ENCODE measurements at regions of chr2 and their contacts with region 1.

Region 1: DNA sequence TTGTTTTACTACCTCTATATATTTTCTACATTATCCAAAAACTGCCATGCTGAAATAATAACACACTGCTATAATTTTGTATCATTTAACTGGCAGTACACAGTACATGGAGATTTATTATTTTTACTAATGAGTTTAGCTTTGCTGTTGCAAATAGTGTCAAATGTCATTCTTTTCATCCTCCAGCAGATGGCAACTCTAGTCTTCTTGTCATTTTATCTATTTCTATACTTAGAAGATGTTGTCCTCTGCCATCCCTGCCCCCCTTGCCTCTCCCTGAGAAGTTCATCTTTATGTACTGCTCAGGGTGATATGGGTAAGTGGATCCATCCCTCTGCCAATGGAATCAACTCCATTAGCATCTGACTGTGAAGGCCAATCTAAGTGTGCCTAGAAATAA is 21.7 kb upstream of the LRRTM1 start:
- DNase-seq: peak in 1 of 5 donors; percentile 37
- ATAC-seq: peak in 3 of 4 donors; percentile 50 to 60 (median 50)
- H3K4me3 ChIP-seq: no peak overlapping the region
- H3K27ac ChIP-seq: no peak overlapping the region
- H3K4me1 ChIP-seq: peaks cover 0 to 5% (median 0%) of the 10 kb centered on the region in 12 donors
- H3K27me3 ChIP-seq: peaks cover 0 to 19% (median 7%) of the 10 kb centered on the region in 9 donors
- CTCF ChIP-seq: peak in 11 of 12 donors; percentile 47 to 70 (median 61)
- POLR2A ChIP-seq: no peak

Region 2: DNA sequence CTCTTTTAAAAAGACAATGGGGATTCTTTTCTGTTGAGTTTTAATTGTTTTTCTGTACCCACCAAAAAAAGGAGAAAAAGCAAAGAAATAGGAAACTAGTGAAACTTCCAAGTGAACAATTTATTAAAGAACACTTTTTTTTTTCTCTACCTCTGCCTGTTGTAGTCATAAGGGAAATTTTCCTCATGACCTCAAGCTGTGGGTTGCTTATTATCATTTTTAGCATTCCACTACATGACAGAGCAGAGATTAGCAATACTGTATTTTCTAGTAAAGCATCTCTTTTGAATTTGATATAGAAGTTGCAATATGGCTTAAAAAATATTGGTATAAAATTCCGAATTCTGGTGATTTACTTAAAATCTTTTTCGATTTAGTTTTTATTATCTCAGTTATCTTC is 66.2 kb after region 1 on chr2:
- intact Hi-C with region 1: no loop called
- DNase-seq: no peak
- ATAC-seq: no peak
- H3K4me3 ChIP-seq: no peak overlapping the region
- H3K27ac ChIP-seq: no peak overlapping the region
- H3K4me1 ChIP-seq: no peaks in the 10 kb centered on the region
- H3K27me3 ChIP-seq: no peaks in the 10 kb centered on the region
- CTCF ChIP-seq: no peak
- POLR2A ChIP-seq: no peak

Region 3: GRCh38 chr2:80429251-80429650 is 103.0 kb after region 1 on chr2:
- intact Hi-C with region 1: loop called in 1 of 10 experiments (anchors 5 kb)
- DNase-seq: no peak
- ATAC-seq: no peak
- H3K4me3 ChIP-seq: no peak overlapping the region
- H3K27ac ChIP-seq: no peak overlapping the region
- H3K4me1 ChIP-seq: peaks cover 0 to 9% (median 0%) of the 10 kb centered on the region in 12 donors
- H3K27me3 ChIP-seq: no peaks in the 10 kb centered on the region
- CTCF ChIP-seq: no peak
- POLR2A ChIP-seq: no peak